ENCODE measurements at regions of chr6 and their contacts with region 1.

Region 1: DNA sequence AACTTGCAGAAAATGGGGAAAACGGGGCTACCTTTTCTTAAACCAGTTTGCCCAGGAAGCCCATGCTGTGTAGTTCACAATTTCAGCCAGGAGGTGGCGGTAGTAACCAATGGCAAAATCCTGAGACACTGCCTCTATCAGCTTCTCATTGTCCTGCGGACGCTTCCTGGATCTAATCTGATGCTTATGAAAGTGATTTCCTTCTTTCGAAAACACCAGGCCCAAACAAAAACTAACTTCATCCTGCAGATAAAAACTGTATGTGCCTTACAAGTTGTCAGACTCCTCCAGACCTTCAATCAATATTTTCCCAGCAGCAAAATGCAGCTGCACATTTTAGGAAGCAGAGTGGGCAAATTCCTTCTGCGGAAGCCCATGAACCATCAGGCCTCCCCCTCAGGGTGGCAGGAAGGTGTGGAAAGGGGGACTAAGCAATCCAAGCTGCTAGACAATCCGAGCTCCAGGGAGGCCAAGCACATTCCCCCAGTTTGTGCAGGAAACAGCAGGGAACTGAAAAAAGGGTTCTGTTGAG is 88.5 kb downstream of the LY86 start:
- DNase-seq: peak; percentile 91
- H3K4me3 ChIP-seq: no peak overlapping the region
- H3K27ac ChIP-seq: peak overlapping the region; percentile 44
- H3K4me1 ChIP-seq: peaks cover 17% of the 10 kb centered on the region
- H3K27me3 ChIP-seq: peaks cover 2 to 7% of the 10 kb centered on the region in 2 experiments
- CTCF ChIP-seq: peak; percentile 85 to 90
- POLR2A ChIP-seq: no peak

Region 2: GRCh38 chr6:5541751-5542432 is 1135.1 kb before region 1 on chr6:
- CTCF ChIA-PET with region 1: no interaction called
- POLR2A ChIA-PET with region 1: no interaction called
- dilution Hi-C with region 1: no loop called
- intact Hi-C with region 1: no loop called
- DNase-seq: no peak
- H3K4me3 ChIP-seq: no peak overlapping the region
- H3K27ac ChIP-seq: no peak overlapping the region
- H3K4me1 ChIP-seq: no peaks in the 10 kb centered on the region
- H3K27me3 ChIP-seq: no peaks in the 10 kb centered on the region
- CTCF ChIP-seq: no peak
- POLR2A ChIP-seq: no peak

Region 3: GRCh38 chr6:6724539-6725467 is 47.8 kb after region 1 on chr6:
- CTCF ChIA-PET with region 1: interaction called, 60 read pairs
- POLR2A ChIA-PET with region 1: no interaction called
- dilution Hi-C with region 1: no loop called
- intact Hi-C with region 1: loop called (anchors 1 kb)
- DNase-seq: peak; percentile 83
- H3K4me3 ChIP-seq: peak overlapping the region in 1 of 3 experiments; percentile 16
- H3K27ac ChIP-seq: peak overlapping the region; percentile 59
- H3K4me1 ChIP-seq: peaks cover 19% of the 10 kb centered on the region
- H3K27me3 ChIP-seq: peaks cover 0 to 2% of the 10 kb centered on the region in 2 experiments
- CTCF ChIP-seq: peak; percentile 57 to 60
- POLR2A ChIP-seq: no peak

Region 4: DNA sequence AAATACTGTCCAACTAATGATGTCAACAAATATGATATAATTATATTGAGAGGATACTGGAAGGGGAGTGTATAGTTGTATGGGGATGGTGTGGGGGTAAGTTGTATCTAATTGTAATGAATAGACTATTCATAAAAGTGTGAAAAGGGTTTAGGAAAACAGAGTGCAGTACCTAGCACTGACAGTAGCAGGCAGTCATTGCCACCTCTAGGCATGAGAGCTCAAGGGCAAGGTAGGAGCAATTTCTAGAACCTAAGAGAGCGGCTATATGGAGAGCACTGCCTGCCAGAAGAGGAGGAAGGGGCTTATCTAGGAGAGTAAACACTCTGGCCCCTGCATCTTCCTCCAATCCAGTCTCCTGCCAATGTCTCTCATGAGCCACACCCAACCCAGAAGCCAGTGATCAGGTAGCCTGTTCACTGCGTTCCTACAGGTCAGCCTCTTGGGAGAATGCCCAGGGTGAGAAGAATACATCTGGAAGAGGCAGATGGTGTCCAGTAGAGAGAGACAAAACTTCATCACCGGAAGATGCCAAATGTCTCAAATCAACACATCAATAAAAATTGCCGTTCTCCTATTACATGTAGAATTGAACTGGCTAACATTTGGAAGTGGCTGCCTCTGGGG is 111.5 kb after region 1 on chr6:
- CTCF ChIA-PET with region 1: interaction called, 3 read pairs
- POLR2A ChIA-PET with region 1: no interaction called
- dilution Hi-C with region 1: no loop called
- intact Hi-C with region 1: loop called (anchors 1 kb)
- DNase-seq: peak; percentile 30
- H3K4me3 ChIP-seq: no peak overlapping the region
- H3K27ac ChIP-seq: no peak overlapping the region
- H3K4me1 ChIP-seq: no peaks in the 10 kb centered on the region
- H3K27me3 ChIP-seq: peaks cover 0 to 6% of the 10 kb centered on the region in 2 experiments
- CTCF ChIP-seq: peak; percentile 43 to 60
- POLR2A ChIP-seq: no peak

Region 5: DNA sequence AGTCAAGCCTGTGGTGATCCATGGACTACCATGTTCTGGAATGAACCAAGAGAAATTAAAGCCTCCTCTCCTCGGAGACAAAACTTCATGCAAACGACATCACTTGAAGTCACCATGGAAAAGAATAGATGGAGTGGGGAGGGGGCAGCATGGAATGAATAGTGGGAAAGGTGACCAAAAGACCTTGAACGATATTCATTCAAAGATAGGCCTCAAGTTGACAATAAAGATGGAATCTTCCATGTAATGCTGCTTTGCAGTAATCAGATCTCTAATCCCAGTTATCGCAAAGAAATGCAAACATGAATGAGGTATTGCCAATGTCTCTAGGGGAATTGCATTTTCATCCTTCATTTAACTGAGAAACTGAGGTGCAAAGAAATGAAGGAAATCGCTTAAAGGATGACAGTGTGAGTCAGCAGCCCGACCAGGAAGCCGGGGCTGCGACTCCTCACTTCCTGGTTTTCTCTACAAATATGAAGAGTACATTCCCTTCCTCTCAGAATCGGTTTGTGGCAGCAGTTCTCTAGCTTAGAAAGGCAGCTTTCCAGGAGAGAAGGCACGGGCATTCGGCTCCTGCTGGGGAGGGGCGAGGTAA is 365.2 kb after region 1 on chr6:
- CTCF ChIA-PET with region 1: no interaction called
- POLR2A ChIA-PET with region 1: no interaction called
- dilution Hi-C with region 1: no loop called
- intact Hi-C with region 1: loop called (anchors 5 kb)
- DNase-seq: peak; percentile 78
- H3K4me3 ChIP-seq: peak overlapping the region in 1 of 3 experiments; percentile 19
- H3K27ac ChIP-seq: peak overlapping the region; percentile 81
- H3K4me1 ChIP-seq: peaks cover 22% of the 10 kb centered on the region
- H3K27me3 ChIP-seq: no peaks in the 10 kb centered on the region
- CTCF ChIP-seq: no peak
- POLR2A ChIP-seq: peak; percentile 39

Region 6: DNA sequence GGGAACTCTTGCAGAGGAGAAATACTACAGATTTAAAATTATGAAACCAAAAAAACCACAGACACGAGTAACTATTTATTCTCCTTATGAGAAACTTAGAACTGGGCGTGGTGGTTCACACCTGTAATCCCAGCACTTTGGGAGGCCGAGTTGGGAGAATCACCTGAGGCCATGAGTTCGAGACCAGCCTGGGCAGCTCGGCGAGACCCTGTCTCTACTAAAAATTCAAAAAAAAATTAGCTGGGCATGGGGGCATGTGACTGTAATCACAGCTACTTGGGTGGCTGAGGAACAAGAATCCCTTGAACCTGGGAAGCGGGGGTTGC is 599.2 kb after region 1 on chr6:
- CTCF ChIA-PET with region 1: interaction called, 12 read pairs
- POLR2A ChIA-PET with region 1: no interaction called
- dilution Hi-C with region 1: no loop called
- intact Hi-C with region 1: no loop called
- DNase-seq: no peak
- H3K4me3 ChIP-seq: no peak overlapping the region
- H3K27ac ChIP-seq: no peak overlapping the region
- H3K4me1 ChIP-seq: no peaks in the 10 kb centered on the region
- H3K27me3 ChIP-seq: no peaks in the 10 kb centered on the region
- CTCF ChIP-seq: no peak
- POLR2A ChIP-seq: no peak

Region 7: DNA sequence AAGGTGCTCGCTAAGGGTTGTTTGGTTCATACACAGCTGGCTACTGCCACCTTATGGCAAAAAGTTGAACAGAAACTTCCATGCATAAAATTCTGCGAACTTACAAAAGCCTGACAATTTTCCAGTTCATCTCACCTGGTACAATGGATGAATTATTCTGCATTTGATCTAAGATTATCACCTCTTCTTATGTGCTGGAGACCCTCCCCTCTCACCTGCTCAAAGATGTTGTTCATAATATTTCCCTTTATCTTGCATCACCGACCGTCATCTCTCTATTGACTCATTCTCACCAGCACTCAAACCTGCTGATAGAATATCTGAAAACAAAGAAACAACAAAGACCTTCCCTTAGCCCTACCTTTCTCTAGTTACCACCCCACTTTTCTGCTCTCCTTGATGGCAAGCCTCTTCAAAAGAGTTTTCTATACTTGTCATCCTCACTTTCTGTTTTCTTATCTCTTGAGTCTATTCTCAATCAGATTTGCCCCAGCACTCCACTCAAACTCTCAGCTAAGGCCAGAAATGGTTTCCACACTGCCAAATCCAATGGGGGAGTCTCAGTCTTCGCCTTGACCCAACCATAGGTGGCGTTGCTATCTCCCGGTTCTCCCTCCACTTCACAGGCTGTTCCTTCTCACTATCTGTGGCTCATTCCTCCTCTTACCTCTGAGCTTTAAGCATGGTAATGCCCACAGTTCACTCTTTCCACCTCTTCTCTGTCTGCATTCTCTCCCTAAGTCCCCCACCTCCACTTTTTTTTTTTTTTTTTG is 938.8 kb after region 1 on chr6:
- CTCF ChIA-PET with region 1: interaction called, 17 read pairs
- POLR2A ChIA-PET with region 1: no interaction called
- dilution Hi-C with region 1: no loop called
- intact Hi-C with region 1: loop called (anchors 1 kb)
- DNase-seq: peak; percentile 64
- H3K4me3 ChIP-seq: no peak overlapping the region
- H3K27ac ChIP-seq: no peak overlapping the region
- H3K4me1 ChIP-seq: no peaks in the 10 kb centered on the region
- H3K27me3 ChIP-seq: no peaks in the 10 kb centered on the region
- CTCF ChIP-seq: peak; percentile 54 to 66
- POLR2A ChIP-seq: no peak